ENCODE measurements at regions of chr17 and their contacts with region 1.

Region 1: DNA sequence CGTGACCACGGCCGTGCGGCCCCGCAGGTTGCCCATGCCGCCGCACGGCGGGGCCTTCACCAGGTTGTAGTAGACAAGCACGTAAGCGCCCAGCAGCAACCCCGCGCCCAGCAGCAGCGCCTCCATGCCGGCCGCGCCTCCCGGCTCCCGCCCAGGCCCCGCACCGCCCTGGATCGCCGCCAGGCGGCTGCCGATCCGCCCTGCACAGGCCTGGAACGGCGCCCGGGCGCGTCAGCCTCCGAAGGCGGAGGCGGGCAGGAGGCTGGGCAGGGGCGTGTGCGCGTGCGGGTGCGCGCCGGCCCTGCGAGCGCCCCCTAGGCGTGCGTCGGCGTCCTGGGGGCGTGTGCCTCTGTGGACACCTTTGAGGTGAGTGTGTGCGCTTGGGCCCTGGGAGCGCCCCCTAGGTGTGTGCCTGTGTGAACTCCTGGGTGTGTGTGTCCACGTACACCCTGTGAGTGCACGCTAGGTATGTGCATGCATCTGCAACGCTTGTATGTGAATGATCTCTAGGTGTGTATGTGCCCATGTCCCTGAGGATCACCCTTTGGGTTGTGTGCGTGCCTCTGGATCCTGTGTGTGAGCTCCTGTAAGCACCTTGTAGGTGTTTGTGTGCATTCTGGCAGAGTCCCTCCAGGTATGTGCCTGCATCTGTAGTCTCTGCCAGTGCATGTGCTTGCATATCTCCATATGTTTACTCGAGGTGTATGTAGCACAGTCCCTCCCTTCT is at the start of gene DHRS13:
- DNase-seq: no peak
- H3K4me3 ChIP-seq: peak within 1 kb of the TSS; percentile 65
- CTCF ChIP-seq: peak; percentile 71

Region 2: DNA sequence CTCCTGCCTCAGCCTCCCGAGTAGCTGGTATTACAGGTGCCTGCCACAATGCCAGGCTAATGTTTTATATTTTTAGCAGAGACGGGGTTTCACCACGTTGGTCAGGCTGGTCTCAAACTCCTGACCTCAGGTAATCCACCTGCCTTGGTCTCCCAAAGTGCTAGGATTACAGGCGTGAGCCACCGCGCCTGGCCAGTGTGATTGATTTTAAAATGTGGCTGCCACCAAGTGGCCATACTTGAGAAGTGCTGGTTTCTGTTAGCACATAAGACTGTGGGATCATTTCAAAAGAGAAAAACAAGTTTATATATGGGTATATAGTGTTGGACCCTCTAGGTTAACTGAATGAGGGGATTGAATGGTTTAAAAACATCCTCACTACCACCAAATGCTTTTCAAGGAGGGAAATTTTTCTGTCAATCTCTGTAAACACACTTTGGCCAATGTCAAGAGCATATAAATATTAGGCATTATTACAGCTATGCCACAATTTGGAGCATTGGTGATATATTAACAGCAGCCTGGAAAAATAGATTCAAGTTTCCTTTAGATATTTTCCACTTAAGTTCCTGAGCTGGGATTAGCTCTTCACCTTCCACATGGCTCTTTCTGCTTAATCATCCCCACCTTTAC is 13.4 kb after region 1 on chr17:
- CTCF ChIA-PET with region 1: interaction called, 35 read pairs
- POLR2A ChIA-PET with region 1: no interaction called
- DNase-seq: no peak
- H3K4me3 ChIP-seq: no peak overlapping the region
- CTCF ChIP-seq: peak; percentile 44

Region 3: GRCh38 chr17:28925912-28926365 is 23.0 kb after region 1 on chr17:
- CTCF ChIA-PET with region 1: interaction called, 31 read pairs
- POLR2A ChIA-PET with region 1: no interaction called
- DNase-seq: peak; percentile 49
- H3K4me3 ChIP-seq: no peak overlapping the region
- CTCF ChIP-seq: no peak

Measured in AG04449 (cell line).